ENCODE measurements at regions of chr15 and their contacts with region 1.

Region 1: DNA sequence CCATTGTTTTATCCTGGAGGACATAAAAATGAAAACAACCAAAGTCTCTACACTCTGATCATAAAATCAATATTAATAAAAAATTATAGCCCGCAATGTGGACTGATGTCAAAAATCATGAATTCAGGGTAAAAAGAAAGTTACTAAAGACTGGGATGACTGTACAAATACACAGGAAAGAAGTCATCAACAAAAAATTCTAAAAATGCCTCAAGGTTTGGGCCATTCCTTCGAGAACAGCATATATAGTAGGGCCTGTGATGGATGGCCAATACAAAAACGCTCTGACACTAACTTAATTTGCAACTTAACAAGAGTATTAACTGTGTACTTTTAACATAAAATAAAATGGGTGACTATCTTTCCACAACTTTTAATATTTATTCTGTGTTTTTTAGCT is 76.8 kb downstream of the THBS1 start:
- DNase-seq: no peak
- H3K4me3 ChIP-seq: no peak overlapping the region
- H3K27ac ChIP-seq: no peak overlapping the region
- H3K4me1 ChIP-seq: no peaks in the 10 kb centered on the region
- H3K27me3 ChIP-seq: no peaks in the 10 kb centered on the region
- CTCF ChIP-seq: no peak
- EP300 ChIP-seq: no peak
- POLR2A ChIP-seq: no peak

Region 2: GRCh38 chr15:39287322-39288195 is 370.2 kb before region 1 on chr15:
- in situ Hi-C with region 1: no loop called
- intact Hi-C with region 1: no loop called
- DNase-seq: no peak
- H3K4me3 ChIP-seq: no peak overlapping the region
- H3K27ac ChIP-seq: no peak overlapping the region
- H3K4me1 ChIP-seq: no peaks in the 10 kb centered on the region
- H3K27me3 ChIP-seq: no peaks in the 10 kb centered on the region
- CTCF ChIP-seq: no peak
- EP300 ChIP-seq: no peak
- POLR2A ChIP-seq: no peak

Region 3: DNA sequence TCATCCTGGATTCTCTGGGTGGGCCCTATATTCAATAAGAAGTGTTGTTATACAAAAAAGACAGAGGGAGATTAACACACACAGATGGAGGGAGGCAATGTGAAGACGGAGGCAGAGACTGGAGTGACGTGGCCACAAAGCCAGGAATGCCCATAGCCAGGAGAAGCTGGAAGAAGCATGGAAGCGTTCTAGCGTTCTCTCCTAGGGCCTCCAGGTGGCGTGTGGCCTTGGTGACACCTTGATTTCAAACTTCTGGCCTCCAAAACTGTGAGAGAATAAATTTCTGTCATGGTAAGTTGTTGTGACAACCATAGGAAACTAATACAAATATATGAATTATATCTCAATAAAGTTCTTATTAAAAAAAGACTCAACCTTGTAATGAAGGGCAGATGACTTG is 55.6 kb before region 1 on chr15:
- in situ Hi-C with region 1: no loop called
- intact Hi-C with region 1: loop called (anchors 10 kb)
- DNase-seq: no peak
- H3K4me3 ChIP-seq: no peak overlapping the region
- H3K27ac ChIP-seq: no peak overlapping the region
- H3K4me1 ChIP-seq: peaks cover 0 to 35% (median 17%) of the 10 kb centered on the region in 4 donors
- H3K27me3 ChIP-seq: no peaks in the 10 kb centered on the region
- CTCF ChIP-seq: no peak
- EP300 ChIP-seq: no peak
- POLR2A ChIP-seq: no peak

Region 4: DNA sequence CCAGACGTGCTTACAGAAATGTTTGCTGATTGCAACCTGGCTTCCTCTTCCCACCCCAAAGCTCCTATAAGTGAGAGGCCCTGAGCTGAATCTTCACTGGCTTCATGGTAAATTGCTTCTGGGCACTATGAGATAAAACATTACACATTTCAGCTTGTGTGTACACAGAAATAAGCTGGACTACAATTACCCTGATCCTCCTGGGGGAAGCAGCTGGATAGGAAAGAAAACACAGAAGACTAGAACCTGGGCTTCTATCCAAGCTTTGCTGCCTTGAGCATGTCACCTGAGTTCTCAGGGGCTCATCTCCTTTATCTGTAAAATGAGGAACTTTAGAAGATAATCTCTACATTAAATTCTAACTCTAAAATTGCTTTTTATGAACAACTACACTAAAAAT is 36.5 kb before region 1 on chr15:
- in situ Hi-C with region 1: no loop called
- intact Hi-C with region 1: no loop called
- DNase-seq: no peak
- H3K4me3 ChIP-seq: no peak overlapping the region
- H3K27ac ChIP-seq: peak overlapping the region; percentile 81 to 86 (median 84)
- H3K4me1 ChIP-seq: peaks cover 23 to 55% (median 42%) of the 10 kb centered on the region in 4 donors
- H3K27me3 ChIP-seq: no peaks in the 10 kb centered on the region
- CTCF ChIP-seq: no peak
- EP300 ChIP-seq: no peak
- POLR2A ChIP-seq: no peak

Region 5: GRCh38 chr15:39907216-39907615 is 249.5 kb after region 1 on chr15:
- in situ Hi-C with region 1: no loop called
- intact Hi-C with region 1: no loop called
- DNase-seq: no peak
- H3K4me3 ChIP-seq: no peak overlapping the region
- H3K27ac ChIP-seq: no peak overlapping the region
- H3K4me1 ChIP-seq: no peaks in the 10 kb centered on the region
- H3K27me3 ChIP-seq: no peaks in the 10 kb centered on the region
- CTCF ChIP-seq: no peak
- EP300 ChIP-seq: no peak
- POLR2A ChIP-seq: no peak

Measured in transverse colon (tissue), 4 donors.